HCT116 (cell line): ENCODE measurements at regions of chr13 and their contacts with region 1.

Region 1: DNA sequence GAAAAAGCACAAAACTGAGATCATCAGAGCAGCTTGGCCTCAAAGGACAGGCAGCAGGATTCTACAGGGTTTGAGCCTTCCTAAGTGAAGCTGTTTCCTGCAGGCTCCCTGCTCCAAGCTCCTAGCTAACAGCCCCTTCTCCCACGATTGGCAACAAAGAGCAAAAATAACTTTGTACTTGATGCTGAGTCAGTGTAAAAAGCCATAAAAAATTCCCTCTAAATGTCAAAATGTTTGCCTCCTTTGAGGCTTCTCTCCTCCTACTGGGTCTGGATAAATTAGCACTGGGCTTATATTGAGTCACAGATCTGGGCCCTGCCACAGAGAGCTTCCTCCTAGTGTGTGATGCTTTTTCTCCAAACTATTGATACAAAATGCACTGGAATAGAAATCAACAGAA is 153.3 kb downstream of the TNFRSF19 start:
- DNase-seq: no peak
- ATAC-seq: no peak
- H3K4me3 ChIP-seq: no peak overlapping the region
- H3K27ac ChIP-seq: no peak overlapping the region
- H3K4me1 ChIP-seq: no peaks in the 10 kb centered on the region
- H3K27me3 ChIP-seq: no peaks in the 10 kb centered on the region
- CTCF ChIP-seq: no peak
- POLR2A ChIP-seq: no peak
- RAD21 ChIP-seq: no peak

Region 2: DNA sequence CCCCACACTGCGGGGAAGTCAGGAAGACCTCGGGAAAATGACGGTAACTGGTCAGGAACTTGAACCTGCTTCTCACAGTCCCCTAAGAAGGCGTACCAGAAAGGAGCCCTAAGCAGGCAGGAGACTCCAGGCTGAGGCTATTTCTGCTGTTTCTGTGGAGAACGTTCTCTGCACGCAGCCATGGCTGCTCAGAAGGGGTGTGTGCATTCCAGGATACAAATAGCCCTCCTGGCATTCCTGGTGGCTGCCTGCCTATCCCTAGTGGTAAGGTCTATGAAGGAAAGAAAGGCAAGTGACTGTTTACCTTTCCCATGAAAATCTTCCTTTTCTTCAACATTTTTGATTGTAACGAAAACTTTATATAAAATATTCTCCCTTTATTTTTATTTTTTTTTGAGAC is 540.2 kb before region 1 on chr13:
- CTCF ChIA-PET with region 1: no interaction called
- POLR2A ChIA-PET with region 1: no interaction called
- RAD21 ChIA-PET with region 1: no interaction called
- intact Hi-C with region 1: no loop called
- DNase-seq: no peak
- ATAC-seq: no peak
- H3K4me3 ChIP-seq: no peak overlapping the region
- H3K27ac ChIP-seq: no peak overlapping the region
- H3K4me1 ChIP-seq: no peaks in the 10 kb centered on the region
- H3K27me3 ChIP-seq: no peaks in the 10 kb centered on the region
- CTCF ChIP-seq: no peak
- POLR2A ChIP-seq: no peak
- RAD21 ChIP-seq: no peak

Region 3: DNA sequence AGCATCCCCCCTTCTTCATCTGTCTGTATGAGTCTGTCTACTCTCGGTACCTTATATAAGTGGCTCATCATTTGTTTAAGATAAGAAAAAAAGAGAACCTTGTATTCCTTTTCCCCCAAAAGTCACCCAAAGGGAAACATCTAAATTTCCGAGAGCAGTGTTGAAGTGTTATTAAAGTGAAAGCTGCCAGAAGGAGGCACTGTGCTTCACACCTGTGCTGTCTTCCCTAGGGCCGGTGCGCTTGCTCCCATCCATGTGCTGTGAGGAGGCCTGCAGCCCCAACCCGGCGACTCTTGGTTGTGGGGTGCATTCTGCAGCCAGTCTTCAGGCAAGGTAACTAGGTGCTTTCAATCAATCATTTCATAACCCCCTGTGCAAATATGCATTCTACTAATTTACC is 55.7 kb before region 1 on chr13:
- CTCF ChIA-PET with region 1: no interaction called
- POLR2A ChIA-PET with region 1: no interaction called
- RAD21 ChIA-PET with region 1: no interaction called
- intact Hi-C with region 1: loop called (anchors 10 kb)
- DNase-seq: no peak
- ATAC-seq: peak; percentile 72
- H3K4me3 ChIP-seq: no peak overlapping the region
- H3K27ac ChIP-seq: no peak overlapping the region
- H3K4me1 ChIP-seq: no peaks in the 10 kb centered on the region
- H3K27me3 ChIP-seq: no peaks in the 10 kb centered on the region
- CTCF ChIP-seq: peak in 2 of 3 experiments; percentile 45 to 47; a peak in 3 of 6 replicates
- POLR2A ChIP-seq: no peak
- RAD21 ChIP-seq: no peak

Region 4: GRCh38 chr13:24097064-24097463 is 373.6 kb after region 1 on chr13:
- CTCF ChIA-PET with region 1: no interaction called
- POLR2A ChIA-PET with region 1: no interaction called
- RAD21 ChIA-PET with region 1: no interaction called
- intact Hi-C with region 1: no loop called
- DNase-seq: no peak
- ATAC-seq: no peak
- H3K4me3 ChIP-seq: no peak overlapping the region
- H3K27ac ChIP-seq: no peak overlapping the region
- H3K4me1 ChIP-seq: no peaks in the 10 kb centered on the region
- H3K27me3 ChIP-seq: peaks cover 7% of the 10 kb centered on the region; the same call in 1 of the 2 replicates
- CTCF ChIP-seq: no peak
- POLR2A ChIP-seq: no peak
- RAD21 ChIP-seq: no peak

Region 5: DNA sequence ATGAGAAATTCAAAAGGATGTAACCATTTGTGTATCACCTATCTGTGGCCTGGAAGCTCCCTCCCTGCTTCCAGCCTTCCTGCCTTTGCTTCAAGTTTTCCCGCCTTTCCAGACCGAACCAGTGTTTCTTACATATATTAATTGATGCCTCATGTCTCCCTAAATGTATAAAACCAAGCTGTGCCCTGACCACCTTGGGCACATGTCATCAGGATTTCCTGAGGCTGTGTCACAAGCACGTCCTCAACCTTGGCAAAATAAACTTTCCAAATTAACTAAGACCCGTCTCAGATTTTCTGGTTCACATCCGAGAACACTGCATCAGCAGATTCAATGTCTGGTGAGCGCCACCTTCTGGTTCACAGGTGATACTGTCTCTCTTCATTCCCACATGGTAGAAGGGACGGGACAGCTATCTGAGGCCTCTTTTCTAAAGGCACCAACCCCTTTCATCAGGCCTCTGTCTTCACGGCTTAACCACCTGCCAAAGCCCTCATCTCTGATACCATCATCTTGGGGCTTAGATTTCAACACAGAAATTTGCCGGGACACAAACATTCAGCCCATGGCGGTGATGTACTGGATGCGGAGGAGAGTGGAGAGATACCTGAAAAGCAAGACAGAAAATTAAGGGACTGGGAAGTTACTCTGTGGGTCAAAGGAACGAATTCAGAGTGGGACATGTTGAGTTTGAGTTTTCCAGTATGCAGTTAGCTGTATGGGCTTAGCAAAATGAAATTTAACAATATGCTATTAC is 1313.8 kb after region 1 on chr13:
- CTCF ChIA-PET with region 1: no interaction called
- POLR2A ChIA-PET with region 1: no interaction called
- RAD21 ChIA-PET with region 1: no interaction called
- intact Hi-C with region 1: no loop called
- DNase-seq: peak; percentile 55
- ATAC-seq: peak; percentile 99
- H3K4me3 ChIP-seq: no peak overlapping the region
- H3K27ac ChIP-seq: no peak overlapping the region
- H3K4me1 ChIP-seq: no peaks in the 10 kb centered on the region
- H3K27me3 ChIP-seq: peaks cover 9% of the 10 kb centered on the region; the same call in 1 of the 2 replicates
- CTCF ChIP-seq: peak; percentile 62 to 83 (median 81)
- POLR2A ChIP-seq: no peak
- RAD21 ChIP-seq: peak; percentile 58

Region 6: GRCh38 chr13:25352230-25352629 is 1628.8 kb after region 1 on chr13:
- CTCF ChIA-PET with region 1: no interaction called
- POLR2A ChIA-PET with region 1: no interaction called
- RAD21 ChIA-PET with region 1: no interaction called
- intact Hi-C with region 1: no loop called
- DNase-seq: no peak
- ATAC-seq: no peak
- H3K4me3 ChIP-seq: no peak overlapping the region
- H3K27ac ChIP-seq: no peak overlapping the region
- H3K4me1 ChIP-seq: no peaks in the 10 kb centered on the region
- H3K27me3 ChIP-seq: 0 out of 2 replicates have a peak, but pooled peaks cover 4% of the 10 kb centered on the region
- CTCF ChIP-seq: no peak
- POLR2A ChIP-seq: no peak
- RAD21 ChIP-seq: no peak